ENCODE measurements at regions of chr2 and their contacts with region 1.

Region 1: DNA sequence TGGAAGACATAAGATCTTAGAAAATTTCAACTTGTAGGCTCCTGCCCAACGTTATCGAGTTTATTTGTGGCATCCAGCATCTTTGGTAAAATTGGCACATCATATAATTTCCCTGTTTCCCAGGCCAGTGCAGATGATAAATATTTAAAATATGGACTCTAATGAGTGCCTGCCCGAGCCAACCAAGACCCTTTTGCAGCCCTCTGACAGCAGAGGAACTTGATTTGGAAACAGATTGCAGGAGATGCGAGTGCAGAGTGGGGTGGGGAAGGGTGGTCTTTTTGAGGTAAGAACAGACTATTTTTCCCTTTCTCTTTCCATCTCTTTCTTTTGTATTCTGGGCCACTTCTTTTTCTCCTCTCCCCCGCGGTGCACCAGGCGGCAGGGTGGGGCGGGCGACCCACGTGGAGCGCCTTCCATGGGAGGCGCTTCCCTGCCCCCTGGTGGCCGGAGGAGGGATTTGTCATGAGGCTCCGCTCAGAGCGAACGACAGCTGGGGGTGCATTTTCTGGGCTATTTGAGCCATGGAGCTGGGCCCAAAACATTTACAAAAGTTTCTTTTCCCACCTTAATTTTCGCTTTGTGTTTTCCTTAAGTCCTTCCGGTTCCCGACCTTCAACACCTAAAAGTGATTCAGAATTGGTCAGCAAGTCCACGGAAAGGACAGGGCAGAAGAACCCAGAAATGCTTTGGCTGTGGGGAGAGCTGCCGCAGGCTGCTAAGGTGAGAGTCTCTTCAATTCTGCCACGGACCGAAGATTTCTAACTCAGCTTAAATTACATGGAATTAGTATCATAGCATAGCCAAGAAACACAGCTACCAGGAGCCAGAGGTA is 32.7 kb downstream of the LPIN1 start:
- DNase-seq: peak; percentile 86
- ATAC-seq: peak; percentile 94 to 96

Region 2: GRCh38 chr2:11738589-11739436 is 40.3 kb before region 1 on chr2:
- intact Hi-C with region 1: loop called in 1 of 2 experiments (anchors 5 kb)
- DNase-seq: peak; percentile 80
- ATAC-seq: peak; percentile 87 to 91

Measured in left cardiac atrium (tissue), 4 donors.